BJ (cell line): ENCODE measurements at regions of chr10 and their contacts with region 1.

Region 1: DNA sequence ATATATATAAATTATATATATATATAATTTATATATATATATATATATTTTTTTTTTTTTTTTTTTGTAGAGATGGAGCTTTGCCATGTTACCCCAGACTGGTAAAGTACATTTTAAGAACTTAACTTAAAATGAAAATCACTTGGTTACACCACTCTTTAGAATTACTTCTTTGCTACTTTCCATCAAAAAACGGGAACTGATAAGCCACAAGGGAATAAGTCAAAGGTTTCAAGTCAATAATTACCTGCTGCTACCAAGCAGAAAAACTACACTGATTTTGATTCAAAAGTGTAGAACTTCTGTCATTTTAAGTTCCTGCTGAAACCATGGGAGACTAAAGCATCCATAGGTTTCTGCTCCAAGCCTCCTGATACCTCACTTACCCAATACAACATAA is 12.2 kb downstream of the PPA1 start:
- DNase-seq: no peak
- H3K4me3 ChIP-seq: no peak overlapping the region
- H3K27me3 ChIP-seq: no peaks in the 10 kb centered on the region
- CTCF ChIP-seq: no peak

Region 2: DNA sequence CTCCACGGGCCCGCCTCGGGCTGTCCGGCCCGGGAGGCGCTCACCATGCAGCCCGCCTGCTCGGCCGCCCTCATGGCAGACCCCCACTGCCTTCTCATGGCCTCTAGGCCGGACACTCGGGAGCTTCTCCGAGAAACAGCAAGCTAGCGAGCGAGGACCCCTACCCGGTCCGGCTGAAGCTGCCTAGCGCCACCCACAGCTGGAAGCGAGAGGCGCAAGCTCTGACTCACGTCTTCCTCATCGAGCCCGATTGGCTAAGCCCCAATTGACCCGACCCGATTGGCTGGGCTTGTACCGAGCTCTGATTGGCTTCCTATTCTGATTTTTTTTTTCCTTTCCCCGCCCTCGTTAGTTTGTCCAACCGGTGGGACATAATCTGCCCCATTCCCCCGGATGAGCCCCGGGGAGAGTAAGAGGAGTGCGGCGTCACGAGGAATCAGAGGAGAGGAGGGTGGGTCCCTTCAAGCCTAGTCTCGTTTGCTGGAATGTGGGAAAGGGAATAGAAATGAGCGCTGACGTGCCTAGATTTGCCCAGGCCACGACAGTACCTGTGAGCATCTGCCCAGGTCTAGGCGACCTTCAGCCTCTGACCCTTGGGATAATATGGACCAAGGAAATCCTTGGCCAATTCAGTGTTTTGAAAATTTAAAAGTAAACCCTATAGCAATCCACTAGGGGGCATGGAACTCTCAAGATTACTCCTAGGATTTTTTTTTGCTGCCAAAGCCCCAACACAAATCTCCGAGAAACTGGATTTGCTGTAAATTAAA is 74.4 kb before region 1 on chr10 and contains the start of gene TYSND1:
- CTCF ChIA-PET with region 1: interaction called, 23 read pairs
- POLR2A ChIA-PET with region 1: no interaction called
- DNase-seq: peak; percentile 89
- H3K4me3 ChIP-seq: peak within 1 kb of the TSS; percentile 51
- H3K27me3 ChIP-seq: no peaks in the 10 kb centered on the region
- CTCF ChIP-seq: peak; percentile 90
- polyA plus RNA-seq, gene TYSND1: 2.7 and 5.3 TPM in 2 replicates

Region 3: DNA sequence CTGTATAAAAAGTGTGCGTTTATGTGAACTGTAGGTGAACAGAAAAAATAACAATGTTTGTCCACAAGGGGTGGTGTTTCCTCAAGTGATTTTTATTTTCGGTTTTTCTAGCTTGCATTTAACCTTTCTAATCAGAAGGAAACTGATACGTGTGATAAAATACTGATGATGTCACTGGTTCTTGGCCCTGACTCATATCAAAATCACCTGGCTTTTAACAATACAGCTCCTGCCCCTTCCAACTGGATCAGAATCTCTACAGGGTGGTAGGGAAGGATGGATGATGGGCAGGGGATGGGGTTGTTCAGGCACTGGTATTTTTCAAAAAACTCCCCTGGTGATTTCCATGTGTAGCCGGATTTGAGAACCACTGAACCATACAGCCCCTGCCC is 51.9 kb after region 1 on chr10:
- CTCF ChIA-PET with region 1: interaction called, 30 read pairs
- POLR2A ChIA-PET with region 1: no interaction called
- DNase-seq: no peak
- H3K4me3 ChIP-seq: no peak overlapping the region
- H3K27me3 ChIP-seq: peaks cover 6% of the 10 kb centered on the region
- CTCF ChIP-seq: peak; percentile 41; the same call in 1 of the 2 replicates

Region 4: DNA sequence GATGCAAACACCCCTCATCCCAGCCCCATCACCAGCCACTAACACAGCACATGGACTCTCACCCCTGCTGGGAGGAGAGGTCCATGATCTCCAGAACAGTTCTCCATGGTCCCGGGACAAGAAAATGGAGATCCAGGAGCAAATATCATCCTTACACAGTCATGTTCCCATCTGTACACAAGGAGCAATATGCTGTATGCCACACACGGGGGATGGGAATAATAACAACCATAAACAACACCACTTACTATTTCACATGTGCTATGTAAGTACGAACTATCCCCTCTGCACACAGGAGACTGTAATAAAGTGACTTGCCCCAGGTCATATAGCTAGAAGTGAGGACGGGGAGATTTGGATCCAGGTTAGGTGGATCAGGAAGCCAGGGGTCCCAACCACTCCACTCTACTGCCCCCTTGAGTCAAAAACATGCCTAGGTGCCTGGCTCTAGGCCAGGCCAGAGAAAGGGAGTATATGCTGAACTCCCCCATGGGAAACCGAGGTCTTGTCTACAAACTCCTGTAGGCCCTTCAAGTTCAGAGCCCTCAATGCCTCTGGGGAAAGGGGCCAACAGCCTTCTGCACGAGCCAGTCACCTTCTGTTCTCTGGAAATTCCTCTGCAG is 127.3 kb after region 1 on chr10:
- CTCF ChIA-PET with region 1: interaction called, 23 read pairs
- POLR2A ChIA-PET with region 1: no interaction called
- DNase-seq: no peak
- H3K4me3 ChIP-seq: no peak overlapping the region
- H3K27me3 ChIP-seq: no peaks in the 10 kb centered on the region
- CTCF ChIP-seq: peak; percentile 73

Region 5: DNA sequence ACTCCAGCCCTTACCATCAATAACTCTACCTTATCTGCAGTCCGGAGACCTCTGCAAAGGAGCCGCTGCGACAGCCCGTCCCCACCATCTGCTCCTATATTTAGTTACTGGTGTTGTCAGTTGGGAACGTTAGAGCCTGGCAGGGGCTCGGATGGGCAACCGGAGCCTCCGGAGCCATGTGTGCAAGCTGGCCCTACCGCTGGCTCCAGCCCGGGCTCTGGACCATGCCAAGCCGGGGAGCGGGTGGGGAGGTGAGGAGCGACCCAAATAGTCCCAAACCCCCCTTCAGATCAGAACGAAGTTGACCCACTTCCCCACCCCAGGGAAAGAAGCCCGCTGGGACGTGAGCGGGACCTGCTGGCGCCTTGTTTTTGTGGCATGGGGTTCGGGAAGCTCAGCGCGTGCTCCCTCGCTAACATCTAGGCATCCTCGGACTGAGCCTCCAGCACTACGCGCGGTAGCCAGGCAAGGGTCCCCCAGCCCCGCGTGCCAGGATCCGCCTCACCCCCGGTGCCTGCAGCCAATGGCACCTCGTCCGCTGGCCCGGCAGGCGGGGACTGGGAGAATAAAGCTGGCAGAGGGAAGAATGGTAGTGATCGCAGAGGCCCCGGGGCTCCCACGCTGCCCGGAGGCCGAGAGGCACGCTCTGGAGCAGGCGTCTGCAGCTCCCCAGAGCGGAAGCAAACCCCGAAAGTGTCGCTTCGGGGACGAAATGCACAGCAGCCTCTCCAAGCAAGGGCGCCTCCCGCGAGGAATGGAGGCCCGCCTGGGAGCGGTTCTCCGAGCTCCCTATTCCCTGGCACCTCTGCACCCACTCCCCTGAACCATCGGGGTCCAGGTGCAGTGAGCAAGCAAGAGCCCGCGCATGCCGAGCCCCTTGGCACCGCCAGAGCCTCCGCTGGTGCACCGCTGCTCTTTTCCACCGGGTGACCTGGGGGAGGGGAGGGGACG is 160.7 kb after region 1 on chr10:
- CTCF ChIA-PET with region 1: interaction called, 10 read pairs
- POLR2A ChIA-PET with region 1: no interaction called
- DNase-seq: no peak
- H3K4me3 ChIP-seq: peak overlapping the region; percentile 76
- H3K27me3 ChIP-seq: peaks cover 4% of the 10 kb centered on the region; the same call in 1 of the 2 replicates
- CTCF ChIP-seq: no peak